ENCODE measurements at regions of chr13 and their contacts with region 1.

Region 1: DNA sequence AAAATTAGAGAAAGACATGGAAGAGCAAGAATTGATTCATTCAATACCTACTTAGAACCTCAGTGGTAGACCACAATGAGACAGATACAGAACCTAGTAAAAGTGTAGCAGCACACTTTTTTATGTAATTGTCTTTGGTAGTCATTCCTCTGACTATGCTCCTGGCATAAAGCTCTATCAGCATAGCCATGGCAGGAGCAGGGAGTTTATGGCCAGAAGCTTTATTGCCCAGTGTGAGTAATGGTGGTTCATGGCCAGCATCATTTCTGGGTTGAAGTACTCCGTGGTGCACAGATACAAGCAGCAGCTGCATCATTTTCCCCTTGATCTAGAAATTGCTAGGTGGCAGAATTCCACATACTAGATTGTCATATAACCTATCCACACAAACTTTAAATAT is 352.6 kb downstream of the TBC1D4 start:
- DNase-seq: no peak
- H3K4me3 ChIP-seq: no peak overlapping the region
- CTCF ChIP-seq: no peak

Region 2: DNA sequence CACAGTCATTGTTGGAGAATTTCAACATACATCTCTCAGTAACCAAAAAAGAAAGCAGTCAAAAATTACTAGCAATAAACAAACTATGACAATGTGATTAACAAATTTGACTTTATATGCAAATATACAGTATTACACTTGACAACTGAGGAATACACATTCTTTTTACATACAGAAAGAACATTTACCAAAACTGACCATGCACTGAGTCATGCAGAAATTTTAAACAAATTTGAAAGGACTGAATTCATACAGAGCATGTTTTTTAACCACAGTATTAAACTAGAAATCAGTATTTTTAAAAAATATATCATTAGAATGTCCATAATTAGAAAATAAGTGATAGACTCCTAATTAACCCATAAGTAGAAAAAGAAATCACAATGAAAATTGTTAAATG is 67.4 kb before region 1 on chr13:
- in situ Hi-C with region 1: loop called (anchors 5 kb)
- DNase-seq: no peak
- H3K4me3 ChIP-seq: no peak overlapping the region
- CTCF ChIP-seq: no peak

Region 3: GRCh38 chr13:75458696-75459422 is 329.5 kb after region 1 on chr13:
- in situ Hi-C with region 1: no loop called
- DNase-seq: no peak
- H3K4me3 ChIP-seq: no peak overlapping the region
- CTCF ChIP-seq: no peak

Measured in astrocyte of the cerebellum (primary cell).